A673 (cell line): ENCODE measurements at regions of chr2 and their contacts with region 1.

Region 1: GRCh38 chr2:120661551-120661950 is 74.1 kb upstream of the GLI2 start:
- DNase-seq: peak; percentile 62
- H3K4me3 ChIP-seq: no peak overlapping the region
- H3K27ac ChIP-seq: no peak overlapping the region
- H3K4me1 ChIP-seq: no peaks in the 10 kb centered on the region
- H3K27me3 ChIP-seq: no peaks in the 10 kb centered on the region
- CTCF ChIP-seq: no peak

Region 2: GRCh38 chr2:120161190-120161589 is 500.4 kb before region 1 on chr2:
- CTCF ChIA-PET with region 1: no interaction called
- POLR2A ChIA-PET with region 1: no interaction called
- intact Hi-C with region 1: no loop called
- DNase-seq: no peak
- H3K4me3 ChIP-seq: no peak overlapping the region
- H3K27ac ChIP-seq: no peak overlapping the region
- H3K4me1 ChIP-seq: no peaks in the 10 kb centered on the region
- H3K27me3 ChIP-seq: no peaks in the 10 kb centered on the region
- CTCF ChIP-seq: no peak

Region 3: DNA sequence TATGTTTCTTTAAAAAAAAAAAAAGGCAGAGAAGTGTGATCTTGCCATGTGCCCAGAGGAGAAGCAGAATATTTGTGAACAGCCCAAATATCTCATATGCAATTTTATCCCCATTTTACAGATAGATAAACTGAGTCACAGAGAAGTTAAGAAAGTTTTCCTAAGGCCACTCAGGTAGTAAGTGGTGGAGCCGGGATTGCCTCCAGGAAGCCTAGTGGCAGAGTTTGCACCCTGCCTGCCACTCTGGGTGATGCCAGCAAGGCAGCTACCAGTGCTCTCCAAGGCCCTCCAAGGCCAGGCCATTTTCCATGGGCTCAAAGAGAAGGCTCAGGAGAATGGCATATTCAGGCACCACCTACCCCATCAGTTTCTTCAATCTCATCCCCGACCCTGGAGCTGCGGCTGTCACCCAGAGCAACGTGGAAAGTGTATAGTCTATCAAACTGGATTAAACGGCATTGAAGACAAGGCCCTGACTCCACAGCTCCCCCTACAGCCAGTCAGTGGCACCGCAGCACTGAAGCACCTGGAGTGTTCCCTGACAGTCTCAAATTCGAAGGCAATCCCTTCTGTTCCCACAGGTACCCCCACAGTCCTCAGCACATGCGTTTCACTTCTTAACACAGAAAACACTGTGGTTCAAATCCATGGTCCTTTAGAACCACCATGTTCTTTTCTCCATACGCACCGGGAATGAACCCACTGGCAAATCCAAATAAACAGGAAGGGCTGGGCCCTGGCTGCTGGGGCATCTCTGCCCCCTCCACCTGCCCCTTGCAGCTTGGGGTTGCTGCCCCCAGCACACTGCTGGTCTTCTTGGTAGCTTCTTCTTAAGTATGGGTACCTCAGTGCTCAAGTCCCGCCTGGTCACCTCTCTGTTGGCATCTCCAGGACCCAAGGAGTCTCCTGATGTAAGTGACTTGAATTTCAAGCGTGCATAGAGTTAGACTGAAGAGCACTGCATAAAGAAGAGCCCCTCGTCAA is 140.3 kb before region 1 on chr2:
- CTCF ChIA-PET with region 1: no interaction called
- POLR2A ChIA-PET with region 1: no interaction called
- intact Hi-C with region 1: no loop called
- DNase-seq: peak; percentile 60
- H3K4me3 ChIP-seq: no peak overlapping the region
- H3K27ac ChIP-seq: no peak overlapping the region
- H3K4me1 ChIP-seq: no peaks in the 10 kb centered on the region
- H3K27me3 ChIP-seq: no peaks in the 10 kb centered on the region
- CTCF ChIP-seq: peak; percentile 90

Region 4: DNA sequence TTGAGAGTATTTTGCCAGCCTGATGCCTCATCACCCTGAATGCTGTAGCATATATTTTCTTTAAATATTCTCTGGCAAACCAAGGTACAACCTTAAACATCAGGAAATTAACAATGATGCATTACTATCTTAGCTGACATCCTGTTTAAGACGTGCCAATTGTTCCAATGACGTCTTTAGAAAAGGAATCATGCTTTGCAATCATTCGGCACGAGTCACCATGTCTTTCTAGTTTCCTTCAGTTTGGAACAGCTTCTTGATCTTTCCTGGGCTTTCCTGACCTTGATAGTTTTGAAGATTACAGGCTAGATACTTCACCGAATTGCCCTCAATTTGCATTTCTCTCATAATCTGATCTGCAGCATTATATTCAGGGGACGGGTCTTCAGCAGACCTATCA is 14.1 kb before region 1 on chr2:
- CTCF ChIA-PET with region 1: no interaction called
- POLR2A ChIA-PET with region 1: no interaction called
- intact Hi-C with region 1: no loop called
- DNase-seq: no peak
- H3K4me3 ChIP-seq: no peak overlapping the region
- H3K27ac ChIP-seq: no peak overlapping the region
- H3K4me1 ChIP-seq: no peaks in the 10 kb centered on the region
- H3K27me3 ChIP-seq: no peaks in the 10 kb centered on the region
- CTCF ChIP-seq: no peak

Region 5: GRCh38 chr2:120719491-120719890 is 57.9 kb after region 1 on chr2:
- CTCF ChIA-PET with region 1: no interaction called
- POLR2A ChIA-PET with region 1: interaction called, 10 read pairs
- intact Hi-C with region 1: no loop called
- DNase-seq: no peak
- H3K4me3 ChIP-seq: no peak overlapping the region
- H3K27ac ChIP-seq: no peak overlapping the region
- H3K4me1 ChIP-seq: peaks cover 13% of the 10 kb centered on the region
- H3K27me3 ChIP-seq: no peaks in the 10 kb centered on the region
- CTCF ChIP-seq: no peak